Lower leg skin (tissue), 4 donors: ENCODE measurements at regions of chr18 and their contacts with region 1.

Region 1: DNA sequence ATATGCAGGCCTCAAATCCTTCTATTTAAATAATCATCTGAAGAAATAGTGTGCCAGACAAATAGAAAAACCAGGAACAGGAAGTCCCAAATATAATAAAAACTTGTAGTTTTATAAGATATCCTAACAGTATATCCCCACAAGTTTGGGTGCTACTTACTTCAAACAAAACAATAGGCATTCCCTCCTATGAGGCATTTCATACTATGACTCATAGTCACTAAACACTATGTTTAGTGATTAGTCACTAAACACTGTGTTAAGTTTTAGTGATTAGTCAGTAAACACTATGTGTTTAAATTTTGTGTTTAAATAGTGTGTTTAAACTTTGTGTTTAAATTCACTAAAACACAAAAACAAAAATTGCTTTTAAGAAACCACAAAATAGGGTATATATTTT is 407.0 kb upstream of the CDH19 start:
- DNase-seq: no peak
- H3K4me3 ChIP-seq: no peak overlapping the region
- CTCF ChIP-seq: no peak
- POLR2A ChIP-seq: no peak

Region 2: GRCh38 chr18:65725251-65726050 is 1285.5 kb before region 1 on chr18:
- intact Hi-C with region 1: no loop called
- DNase-seq: no peak
- H3K4me3 ChIP-seq: no peak overlapping the region
- CTCF ChIP-seq: no peak
- POLR2A ChIP-seq: no peak

Region 3: GRCh38 chr18:66931010-66931409 is 79.9 kb before region 1 on chr18:
- intact Hi-C with region 1: no loop called
- DNase-seq: no peak
- H3K4me3 ChIP-seq: no peak overlapping the region
- CTCF ChIP-seq: no peak
- POLR2A ChIP-seq: no peak

Region 4: DNA sequence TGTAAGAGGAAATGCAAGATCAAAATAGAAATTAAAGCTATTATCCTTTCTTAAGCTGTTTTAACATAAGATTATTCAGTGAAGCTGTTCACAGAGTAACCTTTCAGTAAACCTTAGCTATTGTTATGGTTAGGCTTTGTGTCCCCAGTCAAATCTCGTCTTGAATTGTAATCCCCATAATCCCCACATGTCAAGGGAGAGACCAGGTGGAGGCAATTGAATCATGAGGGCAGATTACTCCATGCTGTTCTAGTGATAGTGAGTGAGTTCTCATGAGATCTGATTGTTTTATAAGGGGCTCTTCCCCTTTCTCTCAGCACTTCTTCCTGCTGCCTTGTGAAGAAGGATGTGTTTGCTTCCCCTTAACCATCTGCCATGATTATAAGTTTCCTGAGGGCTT is 81.2 kb after region 1 on chr18:
- intact Hi-C with region 1: loop called (anchors 2 kb)
- DNase-seq: no peak
- H3K4me3 ChIP-seq: no peak overlapping the region
- CTCF ChIP-seq: no peak
- POLR2A ChIP-seq: no peak